Mammary epithelial cell (primary cell): ENCODE measurements at regions of chr2 and their contacts with region 1.

Region 1: DNA sequence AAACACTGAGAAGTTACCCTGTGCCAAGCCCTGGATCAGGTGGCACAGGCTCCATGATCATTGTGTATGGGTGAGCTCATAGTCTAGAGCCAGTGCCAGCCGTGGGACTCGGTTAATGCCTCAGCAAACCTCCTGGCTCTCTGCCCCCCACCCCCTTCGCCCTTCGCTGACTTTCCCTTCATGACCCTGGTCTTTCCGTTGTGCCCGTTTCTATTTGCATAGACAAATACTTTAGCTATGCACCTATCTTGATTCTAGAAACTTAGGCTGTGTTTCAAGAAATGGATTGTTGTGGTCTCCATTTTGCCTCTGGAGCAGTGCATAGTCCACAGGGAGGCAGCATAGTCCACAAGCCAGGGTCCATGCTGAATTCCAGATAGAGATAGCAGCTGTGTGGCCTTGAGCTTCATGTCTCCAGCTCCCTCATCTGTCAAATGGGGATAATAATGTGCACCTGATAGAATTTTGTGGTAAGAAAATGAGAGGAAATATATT is 44.8 kb upstream of the KDM3A start:
- DNase-seq: peak; percentile 30
- H3K4me3 ChIP-seq: no peak overlapping the region
- H3K27ac ChIP-seq: no peak overlapping the region
- H3K4me1 ChIP-seq: peaks cover 13% of the 10 kb centered on the region
- H3K27me3 ChIP-seq: no peaks in the 10 kb centered on the region
- CTCF ChIP-seq: peak; percentile 66 to 86

Region 2: DNA sequence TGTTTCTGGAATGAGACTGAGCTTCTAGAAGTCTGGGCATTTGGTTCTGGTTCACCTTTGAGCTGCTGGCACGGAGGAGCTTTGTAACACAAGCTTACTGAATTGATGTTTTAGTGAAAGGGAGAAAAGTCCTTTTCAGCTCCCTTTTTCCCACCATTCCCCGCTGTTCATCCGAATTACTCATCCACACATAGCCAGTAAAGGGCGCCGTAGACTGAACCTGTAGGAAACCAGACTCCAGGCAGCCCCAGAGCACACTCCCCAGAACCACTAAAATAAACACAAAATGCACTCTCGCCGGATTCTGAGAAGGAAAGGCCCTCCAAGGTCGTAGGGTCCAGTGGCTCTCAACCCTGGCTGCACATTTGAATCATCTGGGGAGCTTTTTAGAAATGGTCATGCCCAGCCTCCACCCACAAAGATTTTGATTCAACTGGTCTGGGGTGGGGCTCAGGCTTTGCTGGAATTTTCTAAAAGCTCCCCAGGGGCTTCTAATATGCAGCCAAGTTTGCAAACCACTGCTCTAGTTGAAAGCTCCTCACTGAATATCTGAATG is 1233.5 kb before region 1 on chr2:
- CTCF ChIA-PET with region 1: no interaction called
- dilution Hi-C with region 1: no loop called
- in situ Hi-C with region 1: no loop called
- intact Hi-C with region 1: no loop called
- DNase-seq: no peak
- H3K4me3 ChIP-seq: no peak overlapping the region
- H3K27ac ChIP-seq: no peak overlapping the region
- H3K4me1 ChIP-seq: peaks cover 11% of the 10 kb centered on the region
- H3K27me3 ChIP-seq: no peaks in the 10 kb centered on the region
- CTCF ChIP-seq: no peak

Region 3: DNA sequence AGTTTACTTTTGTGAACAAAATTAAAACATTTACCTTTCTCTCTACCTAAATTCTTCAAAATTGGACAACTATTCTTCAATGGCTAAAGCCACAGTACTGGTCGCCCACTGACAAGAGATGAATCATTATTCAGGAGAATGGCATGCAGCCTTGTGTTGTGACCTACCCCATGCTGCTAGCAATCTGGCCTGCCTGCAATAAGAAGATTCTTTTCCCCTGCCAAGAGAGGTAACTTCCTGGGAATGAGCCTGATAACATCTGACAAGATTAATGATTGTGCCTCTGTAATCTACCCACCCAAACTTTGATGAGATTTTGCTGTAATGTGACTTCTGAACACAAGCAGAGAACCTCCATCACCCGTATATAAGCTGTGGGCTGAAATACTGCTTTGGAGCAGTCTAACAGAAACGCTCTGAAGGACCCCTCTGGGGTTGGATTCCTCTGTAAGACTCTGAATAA is 460.6 kb before region 1 on chr2:
- CTCF ChIA-PET with region 1: no interaction called
- dilution Hi-C with region 1: no loop called
- in situ Hi-C with region 1: no loop called
- intact Hi-C with region 1: no loop called
- DNase-seq: peak; percentile 54
- H3K4me3 ChIP-seq: no peak overlapping the region
- H3K27ac ChIP-seq: peak overlapping the region; percentile 41
- H3K4me1 ChIP-seq: peaks cover 26% of the 10 kb centered on the region
- H3K27me3 ChIP-seq: no peaks in the 10 kb centered on the region
- CTCF ChIP-seq: no peak

Region 4: DNA sequence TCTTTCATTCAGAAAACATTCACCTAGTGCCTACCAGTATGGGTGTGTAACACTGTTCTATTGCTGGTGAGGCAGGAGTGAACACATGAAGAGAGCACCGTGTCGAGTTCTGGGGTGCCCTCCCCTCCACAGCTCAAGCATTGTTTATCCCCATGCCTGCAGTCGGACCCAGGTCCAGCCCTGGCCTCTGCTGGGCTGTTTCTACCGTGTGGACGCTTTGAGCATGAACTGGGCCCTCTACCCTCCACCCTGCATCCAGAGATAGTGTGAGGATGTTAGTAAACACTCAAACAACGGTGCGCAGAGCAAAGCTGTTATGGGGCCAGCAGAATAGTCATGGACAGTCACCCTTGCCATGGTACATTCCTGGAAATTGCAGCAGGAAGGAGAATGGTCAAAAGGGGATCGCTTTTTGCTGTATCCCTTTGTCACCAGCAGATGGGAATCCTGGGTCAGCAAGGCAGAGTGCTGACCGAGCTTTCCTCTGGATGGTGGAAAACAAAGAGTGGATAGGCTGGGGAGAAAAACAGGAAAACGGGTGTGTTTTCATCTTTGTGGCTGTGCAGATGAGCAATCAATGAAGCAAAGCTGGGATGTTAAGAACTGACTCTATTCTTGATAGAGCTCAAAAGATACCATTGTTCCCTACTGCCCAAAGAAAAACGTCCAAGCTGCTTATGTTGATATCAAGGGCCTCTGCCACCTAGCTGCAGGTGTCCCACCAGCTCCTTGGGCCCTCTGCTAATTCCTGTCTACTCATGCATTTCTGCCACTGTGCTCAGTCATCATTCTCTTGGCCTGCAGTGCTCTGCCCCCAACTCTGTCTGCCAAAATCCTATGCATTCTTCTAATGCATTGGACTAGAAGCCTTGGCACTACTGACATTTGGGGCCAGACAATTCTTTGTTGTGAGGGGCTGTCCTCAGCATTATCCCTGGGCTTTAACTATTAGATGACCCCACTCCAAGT is 97.6 kb before region 1 on chr2:
- CTCF ChIA-PET with region 1: no interaction called
- dilution Hi-C with region 1: loop called (anchors 5 kb)
- in situ Hi-C with region 1: no loop called
- intact Hi-C with region 1: no loop called
- DNase-seq: no peak
- H3K4me3 ChIP-seq: no peak overlapping the region
- H3K27ac ChIP-seq: no peak overlapping the region
- H3K4me1 ChIP-seq: no peaks in the 10 kb centered on the region
- H3K27me3 ChIP-seq: no peaks in the 10 kb centered on the region
- CTCF ChIP-seq: peak in 1 of 2 donors; percentile 27

Region 5: GRCh38 chr2:86352137-86352726 is 44.1 kb before region 1 on chr2:
- CTCF ChIA-PET with region 1: no interaction called
- dilution Hi-C with region 1: loop called (anchors 5 kb)
- in situ Hi-C with region 1: no loop called
- intact Hi-C with region 1: no loop called
- DNase-seq: no peak
- H3K4me3 ChIP-seq: no peak overlapping the region
- H3K27ac ChIP-seq: no peak overlapping the region
- H3K4me1 ChIP-seq: no peaks in the 10 kb centered on the region
- H3K27me3 ChIP-seq: peaks cover 3% of the 10 kb centered on the region
- CTCF ChIP-seq: no peak

Region 6: DNA sequence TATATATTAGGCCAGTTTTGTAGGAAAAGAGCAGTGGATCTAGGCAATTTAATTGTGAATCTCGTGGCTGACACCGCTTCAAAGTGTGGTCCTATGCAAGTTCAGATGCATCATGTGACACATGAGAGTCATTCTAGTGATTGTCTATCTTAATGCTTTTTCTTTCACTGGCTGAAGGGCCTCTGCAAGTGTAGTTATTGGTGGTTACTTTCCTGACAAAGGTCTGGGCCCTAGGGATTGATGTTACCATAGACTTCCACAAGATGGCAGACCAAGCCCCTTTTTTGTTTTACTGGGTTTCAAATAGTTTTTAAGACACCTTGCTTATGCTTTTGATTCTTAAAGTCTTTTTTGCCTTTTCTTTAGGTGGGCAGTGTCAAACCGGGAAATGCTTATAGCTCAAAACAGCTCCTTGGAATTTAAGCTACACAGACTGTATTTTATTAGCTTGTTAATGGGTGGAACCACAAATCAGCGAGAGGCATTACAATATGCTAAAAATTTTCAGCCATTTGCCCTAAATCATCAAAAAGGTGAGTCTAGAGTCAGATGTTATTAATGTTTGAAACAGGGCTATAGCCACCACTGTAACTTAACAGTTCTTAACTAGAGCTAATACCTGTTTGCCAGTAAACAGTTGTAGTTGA is 368.4 kb after region 1 on chr2:
- CTCF ChIA-PET with region 1: no interaction called
- dilution Hi-C with region 1: no loop called
- in situ Hi-C with region 1: no loop called
- intact Hi-C with region 1: loop called (anchors 2 kb)
- DNase-seq: peak; percentile 35
- H3K4me3 ChIP-seq: no peak overlapping the region
- H3K27ac ChIP-seq: no peak overlapping the region
- H3K4me1 ChIP-seq: no peaks in the 10 kb centered on the region
- H3K27me3 ChIP-seq: no peaks in the 10 kb centered on the region
- CTCF ChIP-seq: peak; percentile 56 to 62

Region 7: GRCh38 chr2:86808315-86809161 is 412.2 kb after region 1 on chr2:
- CTCF ChIA-PET with region 1: no interaction called
- dilution Hi-C with region 1: no loop called
- in situ Hi-C with region 1: no loop called
- intact Hi-C with region 1: loop called (anchors 1 kb)
- DNase-seq: peak; percentile 84
- H3K4me3 ChIP-seq: peak overlapping the region; percentile 60 to 63 (median 62)
- H3K27ac ChIP-seq: peak overlapping the region; percentile 11
- H3K4me1 ChIP-seq: peaks cover 16% of the 10 kb centered on the region
- H3K27me3 ChIP-seq: no peaks in the 10 kb centered on the region
- CTCF ChIP-seq: peak; percentile 88 to 93